ENCODE measurements at regions of chr17 and their contacts with region 1.

Region 1: GRCh38 chr17:34275881-34276280 is 5.9 kb downstream of the CCL7 start:
- DNase-seq: peak; percentile 97
- ATAC-seq: peak; percentile 95
- H3K4me3 ChIP-seq: no peak overlapping the region
- H3K27ac ChIP-seq: no peak overlapping the region
- H3K4me1 ChIP-seq: peaks cover 2% of the 10 kb centered on the region
- H3K27me3 ChIP-seq: peaks cover 14% of the 10 kb centered on the region
- CTCF ChIP-seq: no peak
- POLR2A ChIP-seq: no peak
- RAD21 ChIP-seq: no peak

Region 2: DNA sequence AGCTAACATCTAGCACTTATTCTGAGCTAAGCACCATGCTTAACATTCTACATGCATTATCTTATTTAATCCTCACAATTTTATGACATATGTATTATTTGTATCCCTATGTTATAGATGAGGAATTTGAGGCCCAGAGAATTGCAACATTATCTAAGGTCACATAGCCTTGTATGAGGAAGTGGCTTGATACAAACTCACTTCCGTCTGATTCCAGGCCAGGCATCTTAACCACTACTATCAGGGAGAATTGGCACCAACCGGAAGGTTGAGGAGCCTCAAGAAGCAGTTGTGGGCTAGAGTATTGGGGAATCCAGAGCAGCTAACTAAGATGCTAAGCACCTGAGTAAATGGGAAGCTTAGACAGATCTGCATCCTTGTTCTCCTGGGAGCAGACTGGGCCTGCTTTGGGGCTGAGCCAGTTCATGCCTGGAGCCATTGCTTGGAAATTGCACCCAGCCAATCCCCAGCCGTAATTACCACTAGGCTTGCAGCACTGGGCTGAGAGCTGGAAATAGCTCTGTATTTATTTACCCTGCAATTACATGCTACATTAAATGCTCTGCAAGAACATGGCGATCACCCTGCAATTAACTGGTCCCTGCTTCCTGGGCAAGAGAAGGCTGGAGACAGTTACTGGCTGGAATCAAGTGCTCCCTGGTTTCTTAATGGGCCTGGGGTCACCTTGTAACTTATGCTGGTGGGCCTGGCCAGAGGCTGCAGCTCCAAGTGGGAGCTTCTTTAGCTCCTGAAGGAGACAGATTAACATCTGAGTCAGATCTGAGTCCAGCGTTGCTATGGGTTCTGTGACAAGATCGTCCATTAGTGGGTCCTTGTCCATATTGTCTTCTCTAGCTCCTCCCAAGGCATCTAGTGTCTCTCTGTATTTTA is 293.9 kb before region 1 on chr17:
- CTCF ChIA-PET with region 1: no interaction called
- POLR2A ChIA-PET with region 1: no interaction called
- dilution Hi-C with region 1: no loop called
- in situ Hi-C with region 1: no loop called
- intact Hi-C with region 1: no loop called
- DNase-seq: no peak
- ATAC-seq: no peak
- H3K4me3 ChIP-seq: no peak overlapping the region
- H3K27ac ChIP-seq: no peak overlapping the region
- H3K4me1 ChIP-seq: no peaks in the 10 kb centered on the region
- H3K27me3 ChIP-seq: no peaks in the 10 kb centered on the region
- CTCF ChIP-seq: no peak
- POLR2A ChIP-seq: no peak
- RAD21 ChIP-seq: no peak

Region 3: DNA sequence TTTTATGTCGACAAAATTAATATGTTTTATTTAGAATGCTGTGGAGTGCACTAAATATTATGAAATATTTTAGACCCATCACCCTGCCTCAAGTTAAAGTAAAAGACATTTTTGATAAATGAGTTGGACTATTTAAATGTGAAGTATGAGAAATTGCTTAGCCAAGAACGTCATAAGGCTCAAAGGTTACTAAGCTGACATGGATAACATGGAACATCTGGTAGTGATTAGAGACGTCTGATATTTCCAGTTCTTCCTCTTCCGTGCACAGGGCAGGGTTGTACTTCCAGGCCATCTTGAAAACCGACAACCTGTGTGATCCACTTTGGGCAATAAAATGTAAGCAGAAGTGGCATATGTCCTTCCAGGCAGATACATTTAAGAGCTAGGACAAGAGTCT is 36.2 kb after region 1 on chr17:
- CTCF ChIA-PET with region 1: no interaction called
- POLR2A ChIA-PET with region 1: no interaction called
- dilution Hi-C with region 1: no loop called
- in situ Hi-C with region 1: no loop called
- intact Hi-C with region 1: no loop called
- DNase-seq: peak; percentile 76
- ATAC-seq: peak; percentile 32; the same call in 1 of the 2 replicates
- H3K4me3 ChIP-seq: no peak overlapping the region
- H3K27ac ChIP-seq: peak overlapping the region; percentile 93; the same call in 1 of the 2 replicates
- H3K4me1 ChIP-seq: peaks cover 9% of the 10 kb centered on the region; the same call in 1 of the 2 replicates
- H3K27me3 ChIP-seq: no peaks in the 10 kb centered on the region
- CTCF ChIP-seq: no peak
- POLR2A ChIP-seq: no peak
- RAD21 ChIP-seq: no peak

Region 4: GRCh38 chr17:34337701-34338100 is 61.8 kb after region 1 on chr17:
- CTCF ChIA-PET with region 1: no interaction called
- POLR2A ChIA-PET with region 1: no interaction called
- dilution Hi-C with region 1: no loop called
- in situ Hi-C with region 1: loop called (anchors 10 kb)
- intact Hi-C with region 1: no loop called
- DNase-seq: no peak
- ATAC-seq: no peak
- H3K4me3 ChIP-seq: no peak overlapping the region
- H3K27ac ChIP-seq: no peak overlapping the region
- H3K4me1 ChIP-seq: no peaks in the 10 kb centered on the region
- H3K27me3 ChIP-seq: no peaks in the 10 kb centered on the region; the same call in 1 of the 2 replicates
- CTCF ChIP-seq: no peak
- POLR2A ChIP-seq: no peak
- RAD21 ChIP-seq: no peak